ENCODE measurements at regions of chr3 and their contacts with region 1.

Region 1: DNA sequence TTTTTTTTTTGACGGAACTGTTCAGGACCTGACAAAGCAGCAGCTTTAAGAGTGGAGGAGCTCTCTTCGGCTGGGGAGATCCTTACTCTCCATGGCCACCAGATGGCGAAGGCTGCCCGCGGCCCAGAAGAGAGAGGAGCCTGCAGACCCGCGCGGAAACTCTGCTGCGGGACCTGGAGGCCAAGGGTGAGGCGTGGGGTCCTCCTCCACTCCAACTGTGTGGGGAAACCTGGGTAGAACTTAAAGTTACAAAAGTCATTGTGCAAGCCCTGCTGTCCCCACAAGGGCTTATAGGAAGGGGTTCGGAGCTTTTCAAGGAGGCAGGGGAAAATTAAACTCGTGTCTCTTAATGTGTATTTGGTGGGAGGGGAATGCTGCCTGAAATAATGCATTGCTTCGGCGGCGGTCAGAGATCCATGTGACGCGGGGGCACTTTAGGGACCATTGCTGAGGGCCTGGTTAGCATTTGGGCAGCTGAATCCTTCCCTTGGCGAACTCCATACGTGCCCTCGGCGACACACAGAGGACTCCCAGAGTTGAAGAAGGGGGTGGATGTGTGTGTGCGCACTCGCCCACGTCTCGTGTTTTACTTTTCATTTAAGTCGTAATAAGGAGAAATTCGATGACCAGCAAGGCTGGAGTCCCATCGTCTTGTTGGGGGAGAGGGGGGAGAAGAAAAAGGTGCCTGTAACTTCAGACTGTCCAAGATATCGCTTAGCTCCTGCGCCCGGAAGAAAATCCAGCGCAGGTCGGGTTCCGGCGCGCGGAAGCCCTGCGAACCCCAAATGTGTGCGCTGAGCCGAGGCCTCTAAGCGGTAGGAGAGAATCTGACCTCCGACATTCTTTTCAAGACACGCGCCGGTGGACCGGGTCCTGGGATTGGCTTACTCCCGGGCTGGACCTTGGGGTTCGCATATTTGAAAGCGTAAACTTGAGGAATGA is 9.7 kb downstream of the EOMES start:
- DNase-seq: peak; percentile 52
- ATAC-seq: peak; percentile 97
- H3K4me3 Mint-ChIP-seq: peak overlapping the region; percentile 93
- H3K27ac Mint-ChIP-seq: peak overlapping the region; percentile 26
- H3K4me1 Mint-ChIP-seq: peaks cover 33% of the 10 kb centered on the region
- H3K27me3 Mint-ChIP-seq: peaks cover 68% of the 10 kb centered on the region
- CTCF ChIP-seq: no peak

Region 2: DNA sequence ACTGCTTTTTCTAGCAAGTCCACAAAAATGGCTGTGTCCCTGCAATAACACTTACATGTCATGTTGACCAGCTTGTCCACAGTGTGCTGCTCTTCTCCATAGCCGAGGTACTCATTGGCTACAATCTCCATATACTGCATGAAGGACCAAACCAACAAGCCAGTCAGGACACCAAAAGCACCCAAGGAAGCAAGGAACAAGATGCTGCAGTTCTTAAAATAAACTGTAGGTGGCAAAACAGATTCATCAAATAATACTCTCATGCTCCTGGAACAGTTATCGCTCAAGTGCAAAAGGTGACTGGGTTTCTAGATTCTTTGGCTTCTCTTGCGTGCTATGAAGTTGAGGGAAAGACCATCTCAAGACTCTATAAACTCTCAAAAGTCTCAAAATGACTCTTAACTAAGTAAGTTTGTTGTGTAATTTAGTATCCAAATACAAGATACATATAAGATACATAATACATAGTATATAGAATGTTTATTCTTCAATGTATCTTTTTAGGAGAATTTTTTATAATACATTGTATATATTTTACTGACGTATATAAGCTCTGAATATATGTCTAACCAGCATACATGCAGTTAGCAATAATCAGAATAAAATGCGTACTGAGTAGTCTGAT is 400.3 kb before region 1 on chr3:
- CTCF ChIA-PET with region 1: no interaction called
- POLR2A ChIA-PET with region 1: no interaction called
- intact Hi-C with region 1: loop called (anchors 1 kb)
- DNase-seq: no peak
- ATAC-seq: peak; percentile 70
- H3K4me3 Mint-ChIP-seq: no peak overlapping the region
- H3K27ac Mint-ChIP-seq: no peak overlapping the region
- H3K4me1 Mint-ChIP-seq: no peaks in the 10 kb centered on the region
- H3K27me3 Mint-ChIP-seq: no peaks in the 10 kb centered on the region
- CTCF ChIP-seq: peak; percentile 35

Region 3: GRCh38 chr3:27740854-27741253 is 28.4 kb after region 1 on chr3:
- CTCF ChIA-PET with region 1: no interaction called
- POLR2A ChIA-PET with region 1: no interaction called
- intact Hi-C with region 1: no loop called
- DNase-seq: no peak
- ATAC-seq: no peak
- H3K4me3 Mint-ChIP-seq: no peak overlapping the region
- H3K27ac Mint-ChIP-seq: no peak overlapping the region
- H3K4me1 Mint-ChIP-seq: no peaks in the 10 kb centered on the region
- H3K27me3 Mint-ChIP-seq: peaks cover 15% of the 10 kb centered on the region
- CTCF ChIP-seq: no peak

Region 4: GRCh38 chr3:28241221-28242160 is 529.1 kb after region 1 on chr3 and contains the start of gene CMC1:
- CTCF ChIA-PET with region 1: no interaction called
- POLR2A ChIA-PET with region 1: no interaction called
- intact Hi-C with region 1: loop called (anchors 2 kb)
- DNase-seq: peak; percentile 88
- ATAC-seq: peak; percentile 94
- H3K4me3 Mint-ChIP-seq: peak within 1 kb of the TSS; percentile 98
- H3K27ac Mint-ChIP-seq: peak within 1 kb of the TSS; percentile 89
- H3K4me1 Mint-ChIP-seq: peaks cover 27% of the 10 kb centered on the region
- H3K27me3 Mint-ChIP-seq: no peaks in the 10 kb centered on the region
- CTCF ChIP-seq: no peak
- total RNA-seq, gene CMC1: 10.9 and 14.2 TPM in 2 replicates

Region 5: GRCh38 chr3:28317438-28318022 is 605.1 kb after region 1 on chr3:
- CTCF ChIA-PET with region 1: interaction called, 22 read pairs
- POLR2A ChIA-PET with region 1: no interaction called
- intact Hi-C with region 1: no loop called
- DNase-seq: no peak
- ATAC-seq: peak; percentile 70
- H3K4me3 Mint-ChIP-seq: no peak overlapping the region
- H3K27ac Mint-ChIP-seq: no peak overlapping the region
- H3K4me1 Mint-ChIP-seq: no peaks in the 10 kb centered on the region
- H3K27me3 Mint-ChIP-seq: no peaks in the 10 kb centered on the region
- CTCF ChIP-seq: no peak

Region 6: DNA sequence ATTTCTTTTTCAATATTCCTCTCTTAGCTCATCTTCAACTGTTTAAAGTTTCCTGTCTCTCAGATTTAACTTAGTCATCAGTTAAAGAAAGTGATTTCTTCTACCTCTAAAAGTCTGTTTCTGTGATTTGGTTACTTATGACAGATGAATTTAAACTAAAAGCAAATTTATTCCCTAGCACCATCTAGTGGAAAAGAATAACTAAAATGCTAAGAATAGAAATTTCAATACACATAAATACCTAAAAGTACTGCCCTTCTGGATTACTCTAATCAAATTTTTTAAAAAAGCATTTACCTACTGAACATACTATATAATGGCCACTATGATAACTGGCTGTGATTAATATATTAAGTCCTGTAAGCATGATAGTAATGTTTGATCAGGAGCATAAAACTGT is 622.1 kb after region 1 on chr3:
- CTCF ChIA-PET with region 1: interaction called, 82 read pairs
- POLR2A ChIA-PET with region 1: interaction called, 5 read pairs
- intact Hi-C with region 1: no loop called
- DNase-seq: no peak
- ATAC-seq: no peak
- H3K4me3 Mint-ChIP-seq: no peak overlapping the region
- H3K27ac Mint-ChIP-seq: no peak overlapping the region
- H3K4me1 Mint-ChIP-seq: no peaks in the 10 kb centered on the region
- H3K27me3 Mint-ChIP-seq: no peaks in the 10 kb centered on the region
- CTCF ChIP-seq: no peak